Right lobe of liver (tissue), 6 donors: ENCODE measurements at regions of chr17 and their contacts with region 1.

Region 1: GRCh38 chr17:41966463-41967140 is at the start of gene CNP:
- DNase-seq: peak; percentile 94
- ATAC-seq: peak; percentile 86 to 90 (median 88)
- H3K4me3 ChIP-seq: peak within 1 kb of the TSS; percentile 75 to 95 (median 78)
- H3K27ac ChIP-seq: peak within 1 kb of the TSS; percentile 74 to 88 (median 81)
- H3K4me1 ChIP-seq: peaks cover 0 to 14% (median 3%) of the 10 kb centered on the region in 4 donors
- H3K27me3 ChIP-seq: no peaks in the 10 kb centered on the region
- CTCF ChIP-seq: no peak
- POLR2A ChIP-seq: peak; percentile 91
- total RNA-seq, gene CNP: 30.1 to 42.7 (median 33.0) TPM

Region 2: GRCh38 chr17:41811549-41812380 is 154.8 kb before region 1 on chr17 and contains the start of gene P3H4:
- intact Hi-C with region 1: no loop called
- DNase-seq: peak; percentile 81 to 83 (median 82)
- ATAC-seq: peak; percentile 89 to 95 (median 93)
- H3K4me3 ChIP-seq: peak within 1 kb of the TSS; percentile 70 to 82 (median 80)
- H3K27ac ChIP-seq: peak within 1 kb of the TSS in 1 of 3 donors; percentile 13
- H3K4me1 ChIP-seq: peaks cover 0 to 10% (median 2%) of the 10 kb centered on the region in 4 donors
- H3K27me3 ChIP-seq: no peaks in the 10 kb centered on the region
- CTCF ChIP-seq: peak; percentile 55 to 80 (median 76)
- POLR2A ChIP-seq: peak; percentile 42
- total RNA-seq, gene P3H4: 1.8 to 3.8 (median 2.8) TPM

Region 3: DNA sequence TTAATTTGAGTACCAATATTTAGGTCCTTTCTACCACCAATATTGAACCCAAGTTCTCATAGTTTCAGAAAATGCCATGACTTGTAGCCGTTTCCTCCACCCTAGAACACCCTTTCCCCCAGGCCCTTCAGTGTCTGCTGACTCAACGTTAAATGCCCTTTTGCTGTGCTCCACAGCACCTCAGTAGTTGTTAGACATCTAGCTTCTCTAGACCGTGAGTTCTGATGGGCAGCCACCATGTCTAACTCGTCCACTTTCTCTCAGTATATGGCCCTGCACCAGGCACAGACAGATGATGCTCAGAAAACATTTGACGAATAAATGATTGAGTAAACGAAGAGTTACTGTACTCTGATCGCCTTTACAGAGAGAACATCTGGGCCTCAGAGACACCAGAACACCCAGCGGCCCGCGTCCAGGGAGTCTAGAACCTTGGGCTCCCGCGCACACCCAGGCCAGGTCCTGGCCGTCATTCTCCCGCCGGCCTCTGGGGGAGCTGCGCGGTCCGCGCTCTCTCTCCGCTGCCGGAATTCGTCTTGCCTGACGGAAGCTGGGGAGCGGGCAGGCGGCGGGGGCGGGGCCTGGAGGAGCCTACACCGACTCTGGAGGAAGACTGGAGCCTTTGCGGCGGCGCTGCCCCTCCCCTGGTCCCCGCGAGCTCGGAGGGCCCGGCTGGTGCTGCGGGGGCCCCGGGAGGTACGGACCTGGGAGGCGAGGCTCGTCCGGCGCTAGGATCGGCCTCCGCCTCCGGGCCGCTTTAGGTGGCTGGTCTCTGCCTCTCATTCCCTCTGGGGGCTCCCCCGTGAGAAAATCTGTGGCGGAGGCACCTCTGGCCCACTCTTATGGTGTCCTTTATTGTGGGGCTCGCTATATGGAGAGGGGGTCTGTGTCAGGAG is 53.2 kb after region 1 on chr17 and contains the start of gene NKIRAS2:
- intact Hi-C with region 1: loop called (anchors 10 kb)
- DNase-seq: peak; percentile 94 to 97 (median 96)
- ATAC-seq: peak; percentile 75 to 83 (median 82)
- H3K4me3 ChIP-seq: peak within 1 kb of the TSS; percentile 78 to 98 (median 97)
- H3K27ac ChIP-seq: peak within 1 kb of the TSS; percentile 68 to 86 (median 78)
- H3K4me1 ChIP-seq: peaks cover under 1 to 60% (median 18%) of the 10 kb centered on the region in 4 donors
- H3K27me3 ChIP-seq: no peaks in the 10 kb centered on the region
- CTCF ChIP-seq: peak; percentile 92 to 97 (median 94)
- POLR2A ChIP-seq: peak; percentile 55
- total RNA-seq, gene NKIRAS2: 11.1 to 27.0 (median 12.3) TPM